ENCODE measurements at regions of chr11 and their contacts with region 1.

Region 1: GRCh38 chr11:14907411-14908213 is 15.6 kb upstream of the CYP2R1 start:
- DNase-seq: peak; percentile 12
- H3K4me3 ChIP-seq: no peak overlapping the region
- H3K27ac ChIP-seq: no peak overlapping the region
- H3K4me1 ChIP-seq: peaks cover 5 to 40% (median 12%) of the 10 kb centered on the region in 3 donors
- H3K27me3 ChIP-seq: no peaks in the 10 kb centered on the region
- CTCF ChIP-seq: peak in 5 of 6 experiments; percentile 68 to 77 (median 73)
- POLR2A ChIP-seq: no peak

Region 2: GRCh38 chr11:14537134-14537599 is 370.4 kb before region 1 on chr11:
- intact Hi-C with region 1: loop called (anchors 5 kb)
- DNase-seq: no peak
- H3K4me3 ChIP-seq: no peak overlapping the region
- H3K27ac ChIP-seq: peak overlapping the region in 2 of 4 donors; percentile 68 to 74
- H3K4me1 ChIP-seq: peaks cover 0 to 35% (median 0%) of the 10 kb centered on the region in 3 donors
- H3K27me3 ChIP-seq: no peaks in the 10 kb centered on the region
- CTCF ChIP-seq: peak; percentile 54 to 78 (median 70)
- POLR2A ChIP-seq: no peak

Region 3: GRCh38 chr11:14722496-14722895 is 185.1 kb before region 1 on chr11:
- intact Hi-C with region 1: no loop called
- DNase-seq: no peak
- H3K4me3 ChIP-seq: no peak overlapping the region
- H3K27ac ChIP-seq: no peak overlapping the region
- H3K4me1 ChIP-seq: no peaks in the 10 kb centered on the region
- H3K27me3 ChIP-seq: no peaks in the 10 kb centered on the region
- CTCF ChIP-seq: no peak
- POLR2A ChIP-seq: no peak

Region 4: GRCh38 chr11:14789879-14790484 is 117.6 kb before region 1 on chr11:
- intact Hi-C with region 1: loop called (anchors 10 kb)
- DNase-seq: no peak
- H3K4me3 ChIP-seq: no peak overlapping the region
- H3K27ac ChIP-seq: no peak overlapping the region
- H3K4me1 ChIP-seq: no peaks in the 10 kb centered on the region
- H3K27me3 ChIP-seq: no peaks in the 10 kb centered on the region
- CTCF ChIP-seq: peak in 4 of 6 experiments; percentile 18 to 58 (median 38)
- POLR2A ChIP-seq: no peak

Measured in esophagus squamous epithelium (tissue), 5 donors.